ENCODE measurements at regions of chr16 and their contacts with region 1.

Region 1: DNA sequence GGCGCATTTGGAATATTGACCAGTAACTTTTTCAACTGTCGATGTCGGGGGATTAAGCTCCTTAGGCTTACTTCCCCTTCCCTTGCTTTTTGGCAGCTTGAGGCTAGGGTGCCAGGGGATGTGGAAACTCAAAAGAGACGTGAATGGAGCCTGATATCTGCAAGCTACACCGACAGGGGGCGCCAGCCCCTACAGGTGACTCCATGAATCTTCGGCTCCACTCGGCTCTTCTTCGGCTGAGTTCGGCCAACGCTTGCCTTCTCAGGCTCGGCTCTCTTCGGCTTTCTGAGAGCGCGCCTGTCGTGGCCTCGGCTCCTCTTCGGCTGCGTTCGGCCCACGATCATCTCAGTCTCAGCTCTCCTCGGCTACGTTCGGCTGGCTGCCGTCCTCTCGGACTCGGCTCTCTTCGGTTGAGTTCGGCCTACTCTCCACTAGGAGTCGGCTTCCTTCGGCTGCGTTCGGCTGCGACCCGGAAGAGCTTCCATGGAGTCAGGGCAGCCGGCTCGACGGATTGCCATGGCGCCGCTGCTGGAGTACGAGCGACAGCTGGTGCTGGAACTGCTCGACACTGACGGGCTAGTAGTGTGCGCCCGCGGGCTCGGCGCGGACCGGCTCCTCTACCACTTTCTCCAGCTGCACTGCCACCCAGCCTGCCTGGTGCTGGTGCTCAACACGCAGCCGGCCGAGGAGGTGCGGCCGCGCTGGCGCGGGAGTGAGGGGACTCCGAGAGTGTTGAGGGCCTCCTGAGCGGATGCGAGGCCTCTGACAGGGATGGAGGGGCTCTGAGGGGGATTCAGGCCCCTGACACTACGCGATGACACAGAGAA is at the start of gene ERCC4:
- DNase-seq: peak; percentile 100
- ATAC-seq: peak; percentile 96 to 99 (median 98)
- H3K4me3 ChIP-seq: peak within 1 kb of the TSS; percentile 96
- H3K27ac ChIP-seq: peak within 1 kb of the TSS; percentile 90
- H3K4me1 ChIP-seq: peaks cover 25% of the 10 kb centered on the region
- H3K27me3 ChIP-seq: no peaks in the 10 kb centered on the region
- CTCF ChIP-seq: peak; percentile 85
- total RNA-seq, gene ERCC4: 6.8 to 10.8 (median 8.8) TPM

Region 2: GRCh38 chr16:13866073-13866472 is 53.8 kb before region 1 on chr16:
- intact Hi-C with region 1: loop called in 1 of 2 experiments (anchors 5 kb)
- DNase-seq: peak; percentile 66 to 79
- ATAC-seq: peak; percentile 95 to 98 (median 97)
- H3K4me3 ChIP-seq: no peak overlapping the region
- H3K27ac ChIP-seq: no peak overlapping the region
- H3K4me1 ChIP-seq: no peaks in the 10 kb centered on the region
- H3K27me3 ChIP-seq: no peaks in the 10 kb centered on the region
- CTCF ChIP-seq: peak; percentile 79

Region 3: GRCh38 chr16:14070877-14071575 is 151.1 kb after region 1 on chr16 and contains the start of gene MRTFB:
- intact Hi-C with region 1: loop called (anchors 5 to 10 kb)
- DNase-seq: peak; percentile 83 to 88
- ATAC-seq: peak; percentile 88 to 95 (median 92)
- H3K4me3 ChIP-seq: peak within 1 kb of the TSS; percentile 79
- H3K27ac ChIP-seq: peak within 1 kb of the TSS; percentile 79
- H3K4me1 ChIP-seq: peaks cover 7% of the 10 kb centered on the region
- H3K27me3 ChIP-seq: no peaks in the 10 kb centered on the region
- CTCF ChIP-seq: no peak
- total RNA-seq, gene MRTFB: 14.1 to 26.3 (median 20.0) TPM

Region 4: DNA sequence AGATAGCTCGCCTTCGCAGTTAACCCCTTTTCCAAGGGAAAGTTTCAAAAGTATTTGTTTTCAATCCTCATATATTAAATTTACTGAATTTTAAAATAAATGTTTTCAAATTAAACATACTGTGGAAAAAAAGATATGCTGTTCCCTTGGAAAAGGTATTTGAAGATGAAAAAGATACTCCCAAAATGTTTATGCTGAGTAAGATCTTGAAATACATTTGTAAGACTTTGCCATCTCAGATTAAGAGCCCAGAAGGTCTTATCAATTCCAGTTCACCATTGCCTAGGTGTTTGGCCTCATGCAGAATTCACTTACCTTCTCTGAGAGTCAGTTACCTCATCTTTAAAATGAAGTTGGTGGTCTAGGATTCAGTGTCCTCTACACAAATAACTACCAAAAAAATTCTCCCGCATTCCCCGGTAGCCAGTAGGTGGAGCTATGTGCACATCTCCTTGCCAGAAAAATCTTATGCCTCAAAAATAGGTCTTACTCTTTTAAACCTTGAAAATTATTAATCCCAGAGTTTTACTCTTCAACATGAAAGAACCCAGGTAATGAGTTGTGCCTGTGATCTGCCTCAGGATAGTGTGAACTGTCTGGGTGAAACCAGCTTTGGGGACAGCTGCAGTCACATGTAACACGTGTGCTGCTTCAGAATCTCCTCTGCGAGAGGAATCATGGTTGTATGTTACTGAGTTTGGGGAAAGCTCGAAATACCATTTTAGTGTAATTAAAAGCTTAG is 329.6 kb after region 1 on chr16:
- intact Hi-C with region 1: loop called in 1 of 2 experiments (anchors 10 kb)
- DNase-seq: no peak
- ATAC-seq: peak in 2 of 4 donors; percentile 68 to 79
- H3K4me3 ChIP-seq: no peak overlapping the region
- H3K27ac ChIP-seq: no peak overlapping the region
- H3K4me1 ChIP-seq: peaks cover 7% of the 10 kb centered on the region
- H3K27me3 ChIP-seq: no peaks in the 10 kb centered on the region
- CTCF ChIP-seq: peak; percentile 77

Region 5: DNA sequence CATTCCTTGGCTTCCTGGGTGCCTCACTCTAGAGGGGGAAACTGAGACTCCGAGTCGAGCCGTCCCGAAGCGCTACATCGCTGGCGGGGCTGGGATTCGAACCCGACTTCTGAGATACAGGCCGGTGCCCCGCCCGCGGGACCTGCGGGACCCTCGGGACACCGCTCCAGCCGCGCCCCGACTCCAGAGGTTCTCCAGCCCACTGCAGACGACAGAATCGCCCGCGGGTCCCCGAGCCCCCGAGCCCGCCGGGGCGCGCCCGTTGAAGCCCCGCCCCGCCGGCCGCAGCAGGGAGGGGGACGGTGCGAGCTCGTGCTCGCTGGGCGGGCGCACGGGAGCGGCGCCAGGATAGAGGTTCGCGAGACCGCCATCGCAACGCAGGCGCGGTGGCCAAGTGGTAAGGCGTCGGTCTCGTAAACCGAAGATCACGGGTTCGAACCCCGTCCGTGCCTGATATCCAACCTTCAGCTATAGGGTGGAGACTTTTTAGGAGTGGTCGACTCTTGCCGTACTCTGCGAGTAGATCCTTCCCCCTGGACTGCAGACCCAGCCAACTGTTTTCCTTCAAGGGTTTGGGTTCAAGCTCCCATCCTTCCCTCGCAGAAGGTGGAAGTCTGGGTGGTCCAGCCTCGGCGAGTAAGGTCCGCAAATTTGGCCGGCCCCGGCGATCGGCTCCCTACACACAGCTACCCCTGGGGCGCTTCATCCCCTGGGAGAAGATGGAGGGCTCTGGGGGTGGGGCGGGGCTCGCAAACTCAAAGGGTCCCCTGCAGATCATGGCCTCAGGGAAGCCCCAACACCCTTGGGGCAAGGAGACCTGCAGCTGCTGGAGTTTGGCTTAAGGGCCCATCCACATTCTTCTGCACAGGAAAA is 365.9 kb after region 1 on chr16:
- intact Hi-C with region 1: loop called in 1 of 2 experiments (anchors 5 kb)
- DNase-seq: peak; percentile 90 to 95
- ATAC-seq: peak; percentile 88 to 95 (median 91)
- H3K4me3 ChIP-seq: peak overlapping the region; percentile 98
- H3K27ac ChIP-seq: peak overlapping the region; percentile 92
- H3K4me1 ChIP-seq: peaks cover 5% of the 10 kb centered on the region
- H3K27me3 ChIP-seq: no peaks in the 10 kb centered on the region
- CTCF ChIP-seq: no peak